ENCODE measurements at regions of chr10 and their contacts with region 1.

Region 1: DNA sequence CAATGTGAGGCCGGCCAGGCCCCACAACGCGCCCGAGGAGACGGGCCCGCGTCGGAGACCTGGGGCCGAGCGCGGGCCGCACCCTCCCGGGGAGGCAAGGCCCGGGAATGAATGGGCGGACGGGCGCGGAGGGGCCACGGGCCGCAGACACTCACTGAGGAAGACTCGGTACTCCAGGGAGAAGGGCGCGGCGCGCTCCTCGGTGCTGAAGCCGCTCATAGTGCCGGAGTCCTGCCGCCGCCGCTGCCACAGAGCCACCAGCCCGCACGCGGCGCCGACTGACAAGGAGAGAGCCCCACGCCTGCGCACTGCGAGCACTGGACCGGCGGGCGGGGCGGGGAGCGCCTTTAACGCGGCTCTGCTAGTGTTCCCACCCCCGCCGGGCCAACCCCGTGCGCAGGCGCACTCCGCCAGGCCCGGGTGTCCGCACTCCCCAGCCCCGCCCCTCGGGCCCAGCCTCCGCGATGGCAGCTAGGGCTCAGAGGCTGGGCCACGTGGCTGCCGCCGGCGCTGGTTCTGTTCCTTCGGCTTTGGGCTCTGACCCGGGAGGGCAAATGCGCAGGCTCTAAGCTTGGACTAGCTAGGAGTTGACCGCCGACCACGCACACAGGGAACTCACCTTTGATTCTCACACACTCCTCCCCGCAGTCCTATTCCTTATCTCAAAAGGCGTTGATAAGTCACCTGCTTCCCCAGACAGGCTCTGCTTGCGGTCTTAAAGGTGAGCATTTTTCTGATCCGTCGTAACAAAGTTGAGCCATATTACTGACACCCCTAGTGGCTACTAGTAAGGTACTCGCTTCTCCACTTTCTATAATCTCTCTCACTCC is at the start of gene PPA1:
- DNase-seq: peak; percentile 98
- ATAC-seq: peak; percentile 97
- H3K4me3 ChIP-seq: peak within 1 kb of the TSS; percentile 50 to 95 (median 87)
- H3K4me3 Mint-ChIP-seq: peak within 1 kb of the TSS; percentile 92
- H3K27ac ChIP-seq: peak within 1 kb of the TSS; percentile 75 to 77
- H3K27ac Mint-ChIP-seq: peak within 1 kb of the TSS; percentile 93
- H3K4me1 ChIP-seq: peaks cover 7 to 18% of the 10 kb centered on the region in 2 donors
- H3K4me1 Mint-ChIP-seq: peaks cover 13% of the 10 kb centered on the region
- H3K27me3 ChIP-seq: no peaks in the 10 kb centered on the region
- H3K27me3 Mint-ChIP-seq: no peaks in the 10 kb centered on the region
- CTCF ChIP-seq: peak; percentile 49
- total RNA-seq, gene PPA1: 39.4 and 40.6 TPM in 2 replicates

Region 2: GRCh38 chr10:70221030-70221429 is 12.3 kb before region 1 on chr10:
- CTCF ChIA-PET with region 1: interaction called, 52 read pairs
- POLR2A ChIA-PET with region 1: interaction called, 10 read pairs
- intact Hi-C with region 1: loop called (anchors 1 kb)
- DNase-seq: no peak
- ATAC-seq: no peak
- H3K4me3 ChIP-seq: no peak overlapping the region
- H3K4me3 Mint-ChIP-seq: no peak overlapping the region
- H3K27ac ChIP-seq: no peak overlapping the region
- H3K27ac Mint-ChIP-seq: no peak overlapping the region
- H3K4me1 ChIP-seq: peaks cover 5% of the 10 kb centered on the region in 2 donors
- H3K4me1 Mint-ChIP-seq: peaks cover 12% of the 10 kb centered on the region
- H3K27me3 ChIP-seq: no peaks in the 10 kb centered on the region
- H3K27me3 Mint-ChIP-seq: no peaks in the 10 kb centered on the region
- CTCF ChIP-seq: no peak

Region 3: GRCh38 chr10:70331486-70332268 is 98.4 kb after region 1 on chr10:
- CTCF ChIA-PET with region 1: interaction called, 3 read pairs
- POLR2A ChIA-PET with region 1: no interaction called
- intact Hi-C with region 1: loop called (anchors 1 kb)
- DNase-seq: peak; percentile 83
- ATAC-seq: peak; percentile 88
- H3K4me3 ChIP-seq: peak overlapping the region in 1 of 5 experiments; percentile 33
- H3K4me3 Mint-ChIP-seq: peak overlapping the region; percentile 63
- H3K27ac ChIP-seq: no peak overlapping the region
- H3K27ac Mint-ChIP-seq: peak overlapping the region; percentile 70
- H3K4me1 ChIP-seq: peaks cover 24% of the 10 kb centered on the region in 2 donors
- H3K4me1 Mint-ChIP-seq: peaks cover 29% of the 10 kb centered on the region
- H3K27me3 ChIP-seq: peaks cover 0 to 57% (median 21%) of the 10 kb centered on the region in 4 experiments
- H3K27me3 Mint-ChIP-seq: peaks cover 53% of the 10 kb centered on the region
- CTCF ChIP-seq: no peak

Region 4: GRCh38 chr10:70404036-70404786 is 170.9 kb after region 1 on chr10 and contains the start of gene EIF4EBP2:
- CTCF ChIA-PET with region 1: interaction called, 4 read pairs
- POLR2A ChIA-PET with region 1: no interaction called
- intact Hi-C with region 1: loop called (anchors 1 kb)
- DNase-seq: peak; percentile 97
- ATAC-seq: peak; percentile 99
- H3K4me3 ChIP-seq: peak within 1 kb of the TSS; percentile 53 to 88 (median 77)
- H3K4me3 Mint-ChIP-seq: peak within 1 kb of the TSS; percentile 94
- H3K27ac ChIP-seq: peak within 1 kb of the TSS; percentile 11 to 84
- H3K27ac Mint-ChIP-seq: peak within 1 kb of the TSS; percentile 96
- H3K4me1 ChIP-seq: peaks cover 23 to 24% of the 10 kb centered on the region in 2 donors
- H3K4me1 Mint-ChIP-seq: peaks cover 43% of the 10 kb centered on the region
- H3K27me3 ChIP-seq: no peaks in the 10 kb centered on the region
- H3K27me3 Mint-ChIP-seq: no peaks in the 10 kb centered on the region
- CTCF ChIP-seq: no peak
- total RNA-seq, gene EIF4EBP2: 37.8 and 38.2 TPM in 2 replicates

Region 5: GRCh38 chr10:70528726-70529362 is 295.5 kb after region 1 on chr10:
- CTCF ChIA-PET with region 1: no interaction called
- POLR2A ChIA-PET with region 1: no interaction called
- intact Hi-C with region 1: no loop called
- DNase-seq: no peak
- ATAC-seq: no peak
- H3K4me3 ChIP-seq: no peak overlapping the region
- H3K4me3 Mint-ChIP-seq: no peak overlapping the region
- H3K27ac ChIP-seq: no peak overlapping the region
- H3K27ac Mint-ChIP-seq: no peak overlapping the region
- H3K4me1 ChIP-seq: no peaks in the 10 kb centered on the region
- H3K4me1 Mint-ChIP-seq: peaks cover 2% of the 10 kb centered on the region
- H3K27me3 ChIP-seq: no peaks in the 10 kb centered on the region
- H3K27me3 Mint-ChIP-seq: no peaks in the 10 kb centered on the region
- CTCF ChIP-seq: no peak

Region 6: GRCh38 chr10:70815504-70816219 is 582.3 kb after region 1 on chr10 and contains the start of gene SGPL1:
- CTCF ChIA-PET with region 1: no interaction called
- POLR2A ChIA-PET with region 1: no interaction called
- intact Hi-C with region 1: loop called (anchors 5 kb)
- DNase-seq: peak; percentile 89
- ATAC-seq: peak; percentile 94
- H3K4me3 ChIP-seq: peak within 1 kb of the TSS; percentile 61 to 79 (median 68)
- H3K4me3 Mint-ChIP-seq: peak within 1 kb of the TSS; percentile 99
- H3K27ac ChIP-seq: peak within 1 kb of the TSS; percentile 53 to 79
- H3K27ac Mint-ChIP-seq: peak within 1 kb of the TSS; percentile 97
- H3K4me1 ChIP-seq: peaks cover 7 to 17% of the 10 kb centered on the region in 2 donors
- H3K4me1 Mint-ChIP-seq: peaks cover 25% of the 10 kb centered on the region
- H3K27me3 ChIP-seq: no peaks in the 10 kb centered on the region
- H3K27me3 Mint-ChIP-seq: no peaks in the 10 kb centered on the region
- CTCF ChIP-seq: peak; percentile 97
- total RNA-seq, gene SGPL1: 41.9 and 46.2 TPM in 2 replicates

Measured in B cell (primary cell).